WTC11 (cell line): ENCODE measurements at regions of chr5 and their contacts with region 1.

Region 1: DNA sequence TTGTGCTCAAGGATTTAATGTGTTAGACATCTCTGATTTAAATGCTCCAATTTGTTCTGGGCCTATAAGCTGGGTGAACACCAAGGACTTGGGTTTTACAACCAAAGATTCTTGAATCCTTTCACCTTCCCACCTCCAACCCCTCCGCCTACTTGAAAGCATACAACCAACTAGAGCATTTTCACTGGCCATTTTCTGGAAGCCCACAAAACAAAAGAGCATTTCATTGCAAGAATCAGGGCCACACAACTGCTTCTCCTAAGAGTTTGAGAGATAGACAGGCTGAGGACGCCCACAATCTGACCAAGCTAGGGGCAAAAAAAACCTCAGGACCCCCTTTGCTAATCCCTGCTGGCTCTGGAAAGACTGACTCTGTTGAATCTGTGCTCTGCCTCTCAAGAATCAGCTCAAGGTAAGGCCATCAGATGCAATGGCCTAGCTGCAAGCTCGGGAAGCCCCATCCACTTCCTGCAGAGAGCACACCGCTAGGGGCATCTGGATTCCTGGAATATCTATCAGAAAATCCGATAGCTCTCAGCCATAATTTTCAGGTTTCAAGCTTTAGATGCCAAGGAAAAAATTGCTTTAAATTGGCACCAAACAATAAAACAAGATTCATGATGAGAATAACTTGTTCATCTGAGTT is 57.7 kb downstream of the RETREG1 start:
- DNase-seq: peak; percentile 25
- ATAC-seq: peak; percentile 94
- H3K4me3 Mint-ChIP-seq: no peak overlapping the region
- H3K27ac Mint-ChIP-seq: no peak overlapping the region
- H3K4me1 Mint-ChIP-seq: peaks cover 19% of the 10 kb centered on the region
- H3K27me3 Mint-ChIP-seq: no peaks in the 10 kb centered on the region
- CTCF ChIP-seq: no peak

Region 2: GRCh38 chr5:16574789-16575721 is 15.9 kb after region 1 on chr5:
- CTCF ChIA-PET with region 1: interaction called, 11 read pairs
- POLR2A ChIA-PET with region 1: interaction called, 3 read pairs
- DNase-seq: no peak
- ATAC-seq: peak; percentile 91
- H3K4me3 Mint-ChIP-seq: no peak overlapping the region
- H3K27ac Mint-ChIP-seq: peak overlapping the region; percentile 89
- H3K4me1 Mint-ChIP-seq: peaks cover 49% of the 10 kb centered on the region
- H3K27me3 Mint-ChIP-seq: no peaks in the 10 kb centered on the region
- CTCF ChIP-seq: no peak